Cardiac septum (tissue), 1 donor: ENCODE measurements at regions of chr10 and their contacts with region 1.

Region 1: GRCh38 chr10:79068562-79069324 is at the start of gene ZMIZ1:
- DNase-seq: peak; percentile 93
- total RNA-seq, gene ZMIZ1: 40.7 TPM

Region 2: GRCh38 chr10:78211561-78212051 is 857.1 kb before region 1 on chr10:
- intact Hi-C with region 1: loop called (anchors 5 kb)
- DNase-seq: no peak

Region 3: GRCh38 chr10:78588194-78588811 is 480.4 kb before region 1 on chr10:
- intact Hi-C with region 1: loop called (anchors 2 kb)
- DNase-seq: no peak

Region 4: GRCh38 chr10:78856421-78856820 is 212.3 kb before region 1 on chr10:
- intact Hi-C with region 1: loop called (anchors 5 kb)
- DNase-seq: peak; percentile 76

Region 5: DNA sequence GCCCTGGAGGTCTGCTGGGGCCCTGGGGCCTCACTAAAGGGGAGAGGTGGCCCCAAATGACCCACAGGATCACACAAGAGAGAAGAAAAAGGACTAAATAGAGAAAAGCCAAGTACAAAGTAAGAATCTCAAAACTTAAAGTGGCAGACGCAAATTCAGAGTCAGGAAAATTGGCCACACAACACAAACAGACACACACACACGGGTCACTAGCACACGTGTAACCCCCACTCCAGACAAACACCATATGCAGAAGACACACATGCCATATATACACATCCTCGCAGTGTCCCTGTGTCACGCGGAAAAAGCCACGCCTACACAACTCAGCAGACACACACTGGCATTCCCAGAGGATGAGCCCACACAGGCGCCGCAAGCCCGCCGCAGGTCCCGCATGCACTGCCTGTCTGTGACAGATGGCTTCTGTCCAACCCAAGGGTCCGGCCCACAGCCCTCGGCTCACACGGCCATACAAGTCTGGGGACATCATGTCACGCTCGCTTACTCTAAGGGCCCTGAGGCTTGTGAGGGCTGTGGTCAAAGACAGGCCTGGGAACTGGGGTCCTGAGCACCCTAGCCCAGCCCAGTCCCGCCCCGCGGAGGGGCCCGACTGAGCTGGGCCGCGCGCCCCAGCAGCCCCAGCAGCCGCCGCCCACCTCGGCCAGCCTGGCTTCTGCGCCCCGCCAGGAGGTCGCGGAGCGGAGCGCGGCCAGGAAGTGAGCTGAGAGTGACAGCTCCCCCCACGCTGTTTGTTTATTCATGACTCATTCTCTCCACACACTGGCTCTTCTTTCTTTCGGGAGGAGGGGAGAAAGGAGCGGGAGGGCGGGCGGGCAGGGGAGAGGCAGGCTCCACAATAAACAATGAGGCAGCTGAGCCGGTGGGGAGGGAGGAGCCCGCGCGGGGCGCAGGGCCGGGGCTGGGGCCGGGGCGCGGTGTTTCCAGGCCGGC is 95.5 kb before region 1 on chr10:
- intact Hi-C with region 1: loop called (anchors 2 kb)
- DNase-seq: peak; percentile 91

Region 6: GRCh38 chr10:79137826-79138225 is 69.1 kb after region 1 on chr10:
- intact Hi-C with region 1: loop called (anchors 2 kb)
- DNase-seq: no peak

Region 7: DNA sequence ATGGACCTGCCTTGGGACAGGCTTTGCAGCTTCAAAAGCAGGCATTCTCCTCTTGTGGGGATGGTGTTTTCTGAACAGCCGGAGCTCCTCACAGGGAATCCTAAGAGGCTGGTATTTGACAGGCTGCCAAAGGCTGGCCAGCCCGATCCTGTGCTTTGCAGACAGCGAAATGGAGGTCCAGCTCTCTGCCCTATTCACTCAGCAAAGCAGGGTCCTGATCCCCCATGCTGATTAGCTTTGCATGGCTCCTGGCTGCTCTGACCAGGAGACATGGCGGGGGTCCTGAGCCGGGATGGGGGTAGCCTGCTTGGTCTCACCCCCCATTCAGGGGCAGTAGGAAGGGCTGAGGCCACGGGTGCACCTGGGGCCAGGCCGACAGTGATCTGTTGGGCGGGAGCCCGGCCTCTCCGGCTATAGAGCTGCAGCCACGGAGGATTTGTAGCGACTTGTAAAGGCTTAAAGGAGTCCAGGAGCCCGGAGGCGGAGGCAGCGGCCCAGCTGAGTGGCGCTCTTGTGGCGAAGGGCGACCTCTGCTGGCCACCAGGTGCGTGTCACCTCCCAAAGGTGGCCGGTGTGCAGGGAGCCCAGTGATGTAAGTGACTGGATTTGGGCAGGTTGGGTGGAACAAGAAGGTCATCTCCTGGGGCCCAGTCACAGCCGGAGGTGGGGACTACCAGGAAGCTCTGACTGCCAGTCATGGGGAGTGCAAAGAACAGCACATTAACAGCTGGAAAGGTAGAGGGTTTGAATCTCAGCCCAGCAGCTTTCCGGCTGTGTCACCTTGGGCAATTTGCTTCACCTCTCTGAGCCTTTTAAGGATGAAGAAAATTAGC is 126.6 kb after region 1 on chr10:
- intact Hi-C with region 1: loop called (anchors 1 kb)
- DNase-seq: peak; percentile 92